ENCODE measurements at regions of chr11 and their contacts with region 1.

Region 1: DNA sequence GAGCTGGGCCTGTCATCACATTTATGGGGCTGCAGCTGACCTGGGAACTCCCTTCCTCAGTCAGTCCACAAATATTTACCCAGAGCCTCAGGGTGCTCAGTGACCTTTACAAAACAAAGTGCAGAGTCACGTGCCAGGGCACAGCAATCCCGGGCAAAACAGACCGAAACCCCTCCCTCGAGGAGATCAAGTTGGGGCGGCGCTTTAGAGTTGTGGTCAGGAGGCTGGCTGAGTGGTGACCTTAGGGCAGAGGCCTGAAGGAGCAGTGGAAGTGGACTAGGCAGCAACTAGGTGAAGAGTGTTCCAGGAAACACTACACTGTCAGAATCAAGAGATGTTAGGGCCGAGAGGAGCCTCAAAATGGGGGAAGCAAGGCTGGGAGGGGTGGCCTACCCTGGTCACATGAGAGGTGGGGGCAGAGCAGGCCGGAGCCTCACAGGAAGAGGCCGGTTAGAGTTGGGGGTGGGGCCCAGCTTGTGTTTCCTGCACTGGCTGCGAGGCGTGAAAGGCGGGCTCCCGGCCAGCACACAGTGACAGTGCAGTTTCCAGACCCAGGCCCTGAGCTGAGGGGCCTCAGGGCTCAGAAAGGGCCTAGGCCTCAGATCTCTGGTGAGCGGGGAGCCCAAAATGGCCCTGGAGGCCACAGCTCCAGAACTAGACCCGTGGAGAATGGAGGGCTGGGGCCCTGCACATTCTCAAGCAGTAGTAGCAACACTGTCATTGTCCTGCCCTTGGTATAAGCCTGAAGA is 3.7 kb upstream of the NEAT1 start:
- DNase-seq: peak; percentile 81 to 94 (median 92)
- H3K4me3 ChIP-seq: peak overlapping the region; percentile 17 to 90 (median 76)
- H3K27ac ChIP-seq: peak overlapping the region; percentile 94 to 100 (median 100)
- H3K27me3 ChIP-seq: no peaks in the 10 kb centered on the region
- CTCF ChIP-seq: peak in 5 of 56 donors; percentile 4 to 15 (median 11)

Region 2: DNA sequence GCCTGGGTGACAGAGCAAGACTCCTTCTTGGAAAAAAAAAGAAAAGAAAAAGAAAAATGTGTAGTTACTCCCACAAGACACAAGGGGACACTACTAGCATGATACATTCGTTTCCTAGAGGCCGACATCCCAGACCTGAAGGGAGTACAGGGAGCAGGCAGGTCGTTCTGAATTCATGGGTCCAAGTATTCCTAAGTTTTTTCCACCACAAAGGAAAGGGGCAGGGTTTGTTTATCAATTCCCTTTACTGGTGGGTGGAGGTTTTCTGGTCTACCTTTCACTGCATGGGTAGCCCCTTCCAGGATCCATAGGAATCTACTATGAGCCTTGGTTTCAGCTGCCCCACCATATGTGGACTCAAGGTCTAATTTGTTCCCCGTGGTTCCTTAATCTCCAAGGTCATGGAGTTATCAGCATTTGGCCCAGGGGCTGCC is 52.5 kb before region 1 on chr11:
- intact Hi-C with region 1: loop called in 1 of 2 experiments (anchors 10 kb)
- DNase-seq: peak in 2 of 10 donors; percentile 35 to 52
- H3K4me3 ChIP-seq: peak overlapping the region in 1 of 59 donors; percentile 11
- H3K27ac ChIP-seq: peak overlapping the region in 1 of 59 donors; percentile 3
- H3K27me3 ChIP-seq: no peaks in the 10 kb centered on the region
- CTCF ChIP-seq: peak; percentile 53 to 85 (median 76)

Region 3: GRCh38 chr11:65382033-65382807 is 36.7 kb before region 1 on chr11 and contains the start of gene SLC25A45:
- intact Hi-C with region 1: loop called (anchors 2 kb)
- DNase-seq: peak; percentile 63 to 96 (median 90)
- H3K4me3 ChIP-seq: peak within 1 kb of the TSS; percentile 34 to 70 (median 52)
- H3K27ac ChIP-seq: peak within 1 kb of the TSS; percentile 90 to 100 (median 99)
- H3K27me3 ChIP-seq: no peaks in the 10 kb centered on the region
- CTCF ChIP-seq: peak; percentile 55 to 98 (median 90)
- total RNA-seq, gene SLC25A45: 3.6 to 18.2 (median 9.0) TPM

Region 4: DNA sequence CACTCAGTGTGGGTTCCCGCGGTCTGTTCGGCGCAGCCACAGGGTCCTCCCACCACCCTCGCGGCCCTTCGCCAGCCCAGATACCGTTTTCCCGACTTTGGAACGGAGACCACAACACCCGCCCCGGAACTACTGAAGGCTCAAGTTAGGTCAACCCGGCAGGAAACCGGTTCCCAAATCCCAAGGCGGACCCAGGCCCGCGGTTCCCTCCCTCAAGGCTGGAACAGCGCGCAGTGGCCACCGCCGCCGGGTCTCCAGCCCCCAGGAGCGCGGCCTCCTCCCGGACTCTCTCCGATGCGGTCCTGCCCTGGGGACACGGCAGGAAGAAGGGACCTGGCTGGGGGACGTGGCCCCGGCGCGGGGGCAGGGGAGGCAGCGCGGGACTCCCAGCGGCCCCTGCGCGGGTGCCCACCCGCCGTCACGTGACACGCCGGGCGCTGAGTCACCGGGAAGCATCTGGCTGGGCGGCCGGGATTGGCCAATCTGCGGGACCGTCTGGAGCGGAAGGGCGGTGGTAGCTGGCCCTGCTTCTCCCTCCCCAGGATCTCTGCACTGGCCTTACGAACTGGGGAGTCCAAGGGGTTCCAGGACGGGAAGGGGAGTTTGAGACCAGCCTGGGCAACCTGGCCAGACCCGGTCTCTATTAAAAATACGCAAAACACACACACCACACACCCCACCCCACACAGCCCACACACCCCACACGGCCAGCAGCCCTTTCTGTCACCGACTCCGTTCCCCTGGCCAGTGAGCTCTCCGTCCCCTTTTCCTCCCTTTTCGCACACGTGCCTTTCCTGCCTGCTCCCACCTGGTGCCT is 58.5 kb after region 1 on chr11:
- intact Hi-C with region 1: loop called in 1 of 2 experiments (anchors 1 kb)
- DNase-seq: peak; percentile 93 to 97 (median 96)
- H3K4me3 ChIP-seq: peak overlapping the region; percentile 64 to 100 (median 86)
- H3K27ac ChIP-seq: peak overlapping the region; percentile 91 to 100 (median 100)
- H3K27me3 ChIP-seq: no peaks in the 10 kb centered on the region
- CTCF ChIP-seq: peak in 15 of 56 donors; percentile 7 to 43 (median 19)

Region 5: DNA sequence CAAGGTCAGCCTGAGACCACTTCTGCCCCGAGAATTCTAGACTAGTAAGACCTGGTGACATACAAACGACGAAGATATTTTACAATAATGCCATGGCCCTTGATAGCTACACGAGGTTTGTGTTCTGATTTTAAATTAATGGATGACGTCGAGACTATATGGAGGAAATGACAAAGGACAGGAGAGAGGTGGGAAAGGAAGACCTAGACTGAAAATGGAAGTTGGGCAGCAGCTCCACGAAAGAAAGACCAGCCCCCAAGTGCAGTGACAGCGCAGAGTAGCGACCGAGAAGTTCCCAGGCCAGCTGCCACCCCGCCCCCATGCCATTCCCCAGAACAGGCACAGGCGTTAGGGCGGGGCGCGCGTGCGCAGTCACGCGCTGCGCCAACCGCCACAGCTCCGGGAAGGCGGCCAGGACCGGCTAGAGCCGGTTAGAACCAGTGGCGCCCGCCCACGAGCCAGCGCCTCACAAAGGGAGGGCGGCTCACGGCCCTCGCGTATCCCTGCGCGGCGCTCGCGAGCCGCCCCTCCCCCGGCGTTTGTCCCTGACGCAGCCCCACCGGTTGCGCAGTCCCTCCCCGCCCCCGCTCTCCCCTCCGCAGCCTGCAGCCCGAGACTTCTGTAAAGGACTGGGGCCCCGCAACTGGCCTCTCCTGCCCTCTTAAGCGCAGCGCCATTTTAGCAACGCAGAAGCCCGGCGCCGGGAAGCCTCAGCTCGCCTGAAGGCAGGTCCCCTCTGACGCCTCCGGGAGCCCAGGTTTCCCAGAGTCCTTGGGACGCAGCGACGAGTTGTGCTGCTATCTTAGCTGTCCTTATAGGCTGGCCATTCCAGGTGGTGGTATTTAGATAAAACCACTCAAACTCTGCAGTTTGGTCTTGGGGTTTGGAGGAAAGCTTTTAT is 78.5 kb after region 1 on chr11:
- intact Hi-C with region 1: loop called (anchors 1 kb)
- DNase-seq: peak; percentile 94 to 99 (median 98)
- H3K4me3 ChIP-seq: peak overlapping the region; percentile 68 to 100 (median 92)
- H3K27ac ChIP-seq: peak overlapping the region; percentile 98 to 100 (median 100)
- H3K27me3 ChIP-seq: no peaks in the 10 kb centered on the region
- CTCF ChIP-seq: peak in 39 of 56 donors; percentile 11 to 54 (median 39)

Region 6: GRCh38 chr11:65506770-65507505 is 88.1 kb after region 1 on chr11:
- intact Hi-C with region 1: loop called (anchors 2 to 5 kb)
- DNase-seq: peak in 5 of 10 donors; percentile 26 to 60 (median 34)
- H3K4me3 ChIP-seq: peak overlapping the region in 57 of 59 donors; percentile 7 to 100 (median 91)
- H3K27ac ChIP-seq: peak overlapping the region; percentile 27 to 100 (median 100)
- H3K27me3 ChIP-seq: no peaks in the 10 kb centered on the region
- CTCF ChIP-seq: no peak

Measured in dorsolateral prefrontal cortex (tissue), 120 donors.